ENCODE measurements at regions of chrX and their contacts with region 1.

Region 1: DNA sequence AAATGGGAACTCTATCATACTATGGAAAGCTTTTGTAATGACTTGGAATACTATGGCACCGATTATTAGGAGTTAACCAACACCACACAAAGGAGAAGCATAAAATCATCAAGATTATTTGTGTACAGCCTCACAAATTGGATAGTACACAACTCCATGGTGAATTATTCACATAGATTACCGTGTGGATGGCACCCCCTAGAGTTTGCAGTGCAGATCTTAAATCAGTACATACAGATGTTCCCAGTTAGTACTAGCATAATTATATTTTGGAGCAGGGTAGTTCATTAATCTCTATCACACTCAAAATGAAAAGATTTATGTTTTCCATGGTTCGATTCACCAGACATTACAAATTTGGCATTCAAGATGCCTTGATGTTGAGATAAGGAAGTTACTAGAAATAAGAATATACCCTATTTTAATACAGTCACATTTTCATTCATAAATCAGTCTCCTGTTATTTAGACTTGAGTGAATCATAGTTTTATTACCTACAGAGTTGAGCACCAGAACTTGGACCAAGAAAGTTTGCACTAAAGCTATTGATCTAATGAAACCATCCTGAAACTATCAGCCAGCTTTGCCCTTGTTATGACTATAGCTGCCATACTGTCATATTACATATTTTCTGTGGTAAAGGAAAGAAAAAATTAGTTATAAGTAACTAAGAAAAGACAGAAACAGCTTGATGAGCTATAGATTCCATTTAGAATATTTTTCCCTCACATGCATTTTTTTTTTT is 531.8 kb downstream of the GLUD2 start:
- DNase-seq: no peak
- ATAC-seq: no peak
- H3K4me3 ChIP-seq: no peak overlapping the region
- H3K27ac ChIP-seq: no peak overlapping the region
- H3K4me1 ChIP-seq: no peaks in the 10 kb centered on the region
- H3K27me3 ChIP-seq: no peaks in the 10 kb centered on the region
- CTCF ChIP-seq: peak in 11 of 12 donors; percentile 11 to 51 (median 36)
- POLR2A ChIP-seq: no peak

Region 2: DNA sequence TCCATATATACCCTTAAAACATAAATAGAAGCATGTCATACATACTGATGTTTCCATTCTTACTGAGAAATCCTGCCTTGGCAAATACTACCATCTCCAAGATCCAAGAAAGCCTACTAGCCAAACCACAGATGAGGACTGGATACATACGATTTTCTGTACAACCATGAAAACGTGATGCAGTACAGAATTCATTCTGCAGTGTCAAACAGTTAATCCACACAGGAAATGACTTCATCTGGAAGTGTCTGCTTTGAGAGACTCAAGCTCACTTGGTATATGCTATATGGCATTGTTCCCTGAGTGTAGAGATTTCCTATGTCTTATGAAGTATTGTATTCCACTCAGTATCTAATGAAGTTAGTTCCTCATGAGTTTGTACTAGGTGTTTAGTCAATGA is 797.8 kb before region 1 on chrX:
- intact Hi-C with region 1: loop called in 4 of 10 experiments (anchors 5 to 10 kb)
- DNase-seq: no peak
- ATAC-seq: no peak
- H3K4me3 ChIP-seq: no peak overlapping the region
- H3K27ac ChIP-seq: no peak overlapping the region
- H3K4me1 ChIP-seq: no peaks in the 10 kb centered on the region
- H3K27me3 ChIP-seq: peaks cover 0 to 4% (median 0%) of the 10 kb centered on the region in 9 donors
- CTCF ChIP-seq: no peak
- POLR2A ChIP-seq: no peak

Region 3: DNA sequence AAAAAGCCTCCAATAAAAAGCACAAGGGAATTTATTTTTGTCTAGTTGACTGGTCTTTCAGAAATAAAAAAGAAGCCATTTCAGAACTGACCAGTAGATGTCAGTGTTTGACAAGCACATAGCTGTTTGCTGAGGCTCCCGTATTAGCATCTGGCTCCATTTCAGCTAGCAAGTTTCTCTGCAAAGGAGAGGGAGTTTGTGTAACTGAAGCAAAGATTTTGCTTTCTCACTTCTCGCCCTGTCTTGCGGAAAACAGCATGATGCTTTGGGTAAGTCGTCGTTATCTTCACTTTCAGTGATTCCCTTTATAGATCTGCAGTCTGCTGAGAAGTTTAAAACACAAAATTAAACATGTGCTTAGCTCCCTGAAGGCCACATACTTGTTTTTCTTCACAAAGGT is 789.1 kb before region 1 on chrX:
- intact Hi-C with region 1: loop called in 7 of 10 experiments (anchors 5 to 10 kb)
- DNase-seq: peak in 1 of 5 donors; percentile 39
- ATAC-seq: peak; percentile 47 to 82 (median 56)
- H3K4me3 ChIP-seq: peak overlapping the region in 1 of 12 donors; percentile 8
- H3K27ac ChIP-seq: peak overlapping the region in 4 of 12 donors; percentile 20 to 42 (median 30)
- H3K4me1 ChIP-seq: peaks cover 0 to 12% (median 0%) of the 10 kb centered on the region in 12 donors
- H3K27me3 ChIP-seq: peaks cover 0 to 4% (median 0%) of the 10 kb centered on the region in 9 donors
- CTCF ChIP-seq: peak; percentile 59 to 86 (median 70)
- POLR2A ChIP-seq: no peak

Region 4: DNA sequence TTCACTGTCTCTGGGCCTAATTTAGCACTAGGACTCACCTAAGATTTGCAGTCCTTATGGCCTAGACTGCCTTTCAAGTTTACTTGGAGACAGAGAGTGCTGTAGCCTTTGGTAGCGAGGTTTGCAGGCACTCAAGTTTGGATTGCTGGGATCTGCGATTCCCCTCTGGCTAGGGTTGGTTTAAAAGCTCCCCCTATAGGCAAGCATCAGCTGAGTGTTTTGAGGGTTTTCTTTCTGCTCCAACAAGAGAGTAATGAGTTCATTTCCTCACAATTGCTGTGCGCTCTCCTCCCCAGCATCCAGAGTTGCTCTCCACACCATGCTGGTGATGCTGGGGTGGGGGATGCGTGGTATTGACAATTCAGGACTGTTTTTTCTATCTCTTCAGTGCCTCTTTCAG is 324.9 kb before region 1 on chrX:
- intact Hi-C with region 1: no loop called
- DNase-seq: no peak
- ATAC-seq: no peak
- H3K4me3 ChIP-seq: no peak overlapping the region
- H3K27ac ChIP-seq: no peak overlapping the region
- H3K4me1 ChIP-seq: no peaks in the 10 kb centered on the region
- H3K27me3 ChIP-seq: no peaks in the 10 kb centered on the region
- CTCF ChIP-seq: peak in 1 of 12 donors; percentile 14
- POLR2A ChIP-seq: no peak

Region 5: DNA sequence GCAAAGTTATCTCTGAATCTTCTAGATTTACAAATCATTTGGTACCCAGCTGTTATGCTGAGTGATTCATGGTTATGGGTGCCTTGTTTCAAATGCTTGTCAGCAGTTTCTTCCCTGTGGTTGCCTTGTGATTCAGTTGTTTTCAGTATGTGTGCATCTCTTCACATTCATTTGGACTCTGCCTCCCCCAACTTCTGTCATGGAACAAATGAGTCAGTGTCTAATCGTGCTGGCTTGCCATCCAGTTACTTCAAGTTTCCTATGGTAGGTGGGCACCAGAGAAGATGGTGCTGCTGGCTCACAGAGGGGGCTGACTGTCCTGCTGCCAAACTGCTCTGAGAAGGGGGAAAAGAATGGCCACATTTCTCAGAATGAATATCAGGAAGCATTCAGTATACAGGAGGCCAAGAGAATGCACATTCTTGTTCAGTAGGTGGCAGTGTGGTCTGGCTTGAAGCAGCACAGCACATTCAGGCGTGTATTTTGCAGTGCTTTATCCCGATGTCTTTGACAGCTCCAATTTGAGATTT is 270.8 kb before region 1 on chrX:
- intact Hi-C with region 1: loop called in 2 of 10 experiments (anchors 5 to 10 kb)
- DNase-seq: peak in 1 of 5 donors; percentile 6
- ATAC-seq: peak in 3 of 4 donors; percentile 61 to 77 (median 74)
- H3K4me3 ChIP-seq: no peak overlapping the region
- H3K27ac ChIP-seq: no peak overlapping the region
- H3K4me1 ChIP-seq: peaks cover 0 to 3% (median 0%) of the 10 kb centered on the region in 12 donors
- H3K27me3 ChIP-seq: peaks cover 0 to 4% (median 0%) of the 10 kb centered on the region in 9 donors
- CTCF ChIP-seq: peak in 8 of 12 donors; percentile 8 to 51 (median 36)
- POLR2A ChIP-seq: no peak

Measured in heart left ventricle (tissue), 16 donors.